CD4-positive, alpha-beta memory T cell (primary cell): ENCODE measurements at regions of chr4 and their contacts with region 1.

Region 1: GRCh38 chr4:7857238-7857701 is 82.4 kb downstream of the AFAP1 start:
- DNase-seq: no peak
- H3K4me3 ChIP-seq: no peak overlapping the region
- H3K4me3 Mint-ChIP-seq: peak overlapping the region in 7 of 8 donors; percentile 1 to 78 (median 47)
- H3K27ac ChIP-seq: no peak overlapping the region
- H3K27ac Mint-ChIP-seq: peak overlapping the region; percentile 80 to 98 (median 96)
- H3K4me1 ChIP-seq: peaks cover 61% of the 10 kb centered on the region
- H3K4me1 Mint-ChIP-seq: peaks cover 41 to 73% (median 62%) of the 10 kb centered on the region in 4 donors
- H3K27me3 ChIP-seq: no peaks in the 10 kb centered on the region
- H3K27me3 Mint-ChIP-seq: no peaks in the 10 kb centered on the region

Region 2: GRCh38 chr4:7843831-7844593 is 13.3 kb before region 1 on chr4:
- CTCF ChIA-PET with region 1: interaction called, 19 read pairs
- POLR2A ChIA-PET with region 1: interaction called, 21 read pairs
- intact Hi-C with region 1: loop called (anchors 1 kb)
- DNase-seq: peak; percentile 54 to 72 (median 58)
- H3K4me3 ChIP-seq: no peak overlapping the region
- H3K4me3 Mint-ChIP-seq: peak overlapping the region in 1 of 8 donors; percentile 29
- H3K27ac ChIP-seq: no peak overlapping the region
- H3K27ac Mint-ChIP-seq: peak overlapping the region in 6 of 7 donors; percentile 33 to 94 (median 74)
- H3K4me1 ChIP-seq: peaks cover 19% of the 10 kb centered on the region
- H3K4me1 Mint-ChIP-seq: peaks cover 20 to 41% (median 32%) of the 10 kb centered on the region in 4 donors
- H3K27me3 ChIP-seq: no peaks in the 10 kb centered on the region
- H3K27me3 Mint-ChIP-seq: no peaks in the 10 kb centered on the region

Region 3: GRCh38 chr4:7939377-7940108 is 82.3 kb after region 1 on chr4 and contains the start of gene AFAP1:
- CTCF ChIA-PET with region 1: interaction called, 5 read pairs
- POLR2A ChIA-PET with region 1: interaction called, 42 read pairs
- intact Hi-C with region 1: loop called (anchors 1 kb)
- DNase-seq: peak; percentile 86 to 94 (median 92)
- H3K4me3 ChIP-seq: peak within 1 kb of the TSS; percentile 58 to 61
- H3K4me3 Mint-ChIP-seq: peak within 1 kb of the TSS; percentile 66 to 88 (median 74)
- H3K27ac ChIP-seq: peak within 1 kb of the TSS; percentile 70
- H3K27ac Mint-ChIP-seq: peak within 1 kb of the TSS; percentile 23 to 83 (median 45)
- H3K4me1 ChIP-seq: peaks cover 16% of the 10 kb centered on the region
- H3K4me1 Mint-ChIP-seq: peaks cover 12 to 39% (median 26%) of the 10 kb centered on the region in 4 donors
- H3K27me3 ChIP-seq: no peaks in the 10 kb centered on the region
- H3K27me3 Mint-ChIP-seq: peaks cover 0 to 2% of the 10 kb centered on the region in 2 donors
- total RNA-seq, gene AFAP1: 18.8 to 21.8 TPM

Region 4: DNA sequence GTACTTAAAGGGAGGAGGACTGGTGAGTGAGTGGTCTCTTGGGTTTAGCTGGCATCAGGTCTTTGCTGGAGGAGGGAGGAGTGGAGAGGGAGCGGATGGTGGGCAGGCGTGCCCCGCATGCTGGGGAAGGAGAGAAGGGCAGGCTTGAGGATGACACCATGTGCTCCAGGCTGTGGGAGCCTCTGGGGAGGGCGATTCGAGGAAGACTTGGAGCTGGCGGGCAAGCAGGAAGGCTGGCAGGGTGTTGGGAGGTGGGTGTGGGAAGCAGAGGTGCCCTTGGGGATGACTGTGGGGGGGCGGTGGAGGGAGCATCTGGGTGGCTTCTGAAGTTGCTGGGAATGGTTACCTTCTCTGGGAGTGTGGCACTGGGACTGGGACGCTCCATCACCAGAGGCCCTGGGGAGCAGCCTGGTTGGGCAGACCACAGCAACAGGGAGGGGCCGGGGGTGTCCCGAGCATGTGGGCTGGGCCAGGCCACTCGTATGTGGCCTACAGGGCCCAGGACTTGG is 113.2 kb after region 1 on chr4:
- CTCF ChIA-PET with region 1: no interaction called
- POLR2A ChIA-PET with region 1: interaction called, 5 read pairs
- intact Hi-C with region 1: loop called (anchors 1 kb)
- DNase-seq: no peak
- H3K4me3 ChIP-seq: peak overlapping the region; percentile 50 to 59
- H3K4me3 Mint-ChIP-seq: peak overlapping the region; percentile 92 to 99 (median 98)
- H3K27ac ChIP-seq: peak overlapping the region; percentile 67
- H3K27ac Mint-ChIP-seq: peak overlapping the region; percentile 91 to 98 (median 97)
- H3K4me1 ChIP-seq: peaks cover 66% of the 10 kb centered on the region
- H3K4me1 Mint-ChIP-seq: peaks cover 28 to 74% (median 56%) of the 10 kb centered on the region in 4 donors
- H3K27me3 ChIP-seq: no peaks in the 10 kb centered on the region
- H3K27me3 Mint-ChIP-seq: no peaks in the 10 kb centered on the region

Region 5: GRCh38 chr4:8099981-8100464 is 242.8 kb after region 1 on chr4:
- CTCF ChIA-PET with region 1: no interaction called
- POLR2A ChIA-PET with region 1: no interaction called
- intact Hi-C with region 1: no loop called
- DNase-seq: no peak
- H3K4me3 ChIP-seq: no peak overlapping the region
- H3K4me3 Mint-ChIP-seq: no peak overlapping the region
- H3K27ac ChIP-seq: no peak overlapping the region
- H3K27ac Mint-ChIP-seq: no peak overlapping the region
- H3K4me1 ChIP-seq: no peaks in the 10 kb centered on the region
- H3K4me1 Mint-ChIP-seq: no peaks in the 10 kb centered on the region
- H3K27me3 ChIP-seq: no peaks in the 10 kb centered on the region
- H3K27me3 Mint-ChIP-seq: no peaks in the 10 kb centered on the region

Region 6: DNA sequence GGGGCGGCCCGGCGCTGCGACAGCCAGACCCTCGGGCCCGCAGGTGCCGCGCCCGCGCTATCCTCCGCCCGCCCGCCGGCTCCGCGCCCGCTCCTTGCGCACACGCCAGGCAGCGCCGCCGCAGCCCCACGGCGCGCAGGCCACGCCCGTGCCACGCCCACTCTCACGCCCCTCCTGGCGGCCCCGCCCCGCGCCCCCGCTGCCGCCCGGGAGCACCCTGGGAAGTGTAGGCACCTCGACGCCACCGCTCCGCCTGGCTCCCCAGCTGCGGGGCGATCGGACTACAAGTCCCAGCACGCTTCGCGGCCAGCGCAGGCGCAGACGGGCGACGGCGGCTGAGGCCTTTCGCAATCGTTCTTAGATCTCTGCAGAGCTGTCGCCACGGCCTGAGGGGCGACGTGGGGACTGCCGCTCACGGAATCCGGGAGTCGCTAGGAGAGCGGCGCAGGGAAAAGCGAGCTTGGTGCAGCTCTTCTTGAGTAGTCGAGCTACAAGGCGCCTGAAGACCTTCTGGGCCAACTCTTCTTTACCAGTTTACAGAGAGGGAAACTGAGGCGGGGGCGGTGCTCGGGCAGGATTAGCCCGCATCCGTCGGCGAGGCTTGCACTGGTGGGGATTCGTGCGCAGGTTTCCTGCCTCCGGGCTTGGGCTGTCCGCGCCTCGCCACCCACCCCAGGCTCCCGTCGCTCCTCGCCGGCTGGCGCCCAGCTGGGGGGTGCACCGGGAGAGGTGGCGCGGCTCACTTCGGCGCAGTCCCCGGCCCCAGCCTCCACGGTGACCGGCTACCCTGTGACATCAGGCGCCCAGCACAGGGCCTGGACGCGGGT is 301.7 kb after region 1 on chr4 and contains the start of gene ABLIM2:
- CTCF ChIA-PET with region 1: no interaction called
- POLR2A ChIA-PET with region 1: interaction called, 4 read pairs
- intact Hi-C with region 1: loop called (anchors 2 kb)
- DNase-seq: peak; percentile 96 to 100 (median 99)
- H3K4me3 ChIP-seq: peak within 1 kb of the TSS; percentile 78 to 85
- H3K4me3 Mint-ChIP-seq: peak within 1 kb of the TSS; percentile 92 to 99 (median 97)
- H3K27ac ChIP-seq: peak within 1 kb of the TSS; percentile 61
- H3K27ac Mint-ChIP-seq: peak within 1 kb of the TSS; percentile 85 to 98 (median 95)
- H3K4me1 ChIP-seq: peaks cover 15% of the 10 kb centered on the region
- H3K4me1 Mint-ChIP-seq: peaks cover 11 to 29% (median 19%) of the 10 kb centered on the region in 4 donors
- H3K27me3 ChIP-seq: peaks cover 5% of the 10 kb centered on the region
- H3K27me3 Mint-ChIP-seq: peaks cover 1 to 6% of the 10 kb centered on the region in 2 donors
- total RNA-seq, gene ABLIM2: 6.2 to 7.9 TPM